Naive thymus-derived CD4-positive, alpha-beta T cell (primary cell): ENCODE measurements at regions of chr20 and their contacts with region 1.

Region 1: GRCh38 chr20:2742934-2743559 is 50.5 kb downstream of the EBF4 start:
- DNase-seq: peak; percentile 51 to 84 (median 73)
- ATAC-seq: peak; percentile 75
- H3K4me3 ChIP-seq: peak overlapping the region; percentile 29
- H3K4me3 Mint-ChIP-seq: peak overlapping the region; percentile 66 to 85 (median 76)
- H3K27ac ChIP-seq: peak overlapping the region; percentile 65
- H3K27ac Mint-ChIP-seq: peak overlapping the region; percentile 87 to 99 (median 94)
- H3K4me1 ChIP-seq: peaks cover 30 to 48% of the 10 kb centered on the region in 2 donors
- H3K4me1 Mint-ChIP-seq: peaks cover 34 to 54% (median 50%) of the 10 kb centered on the region in 7 donors
- H3K27me3 ChIP-seq: no peaks in the 10 kb centered on the region
- H3K27me3 Mint-ChIP-seq: peaks cover 0 to 21% (median 0%) of the 10 kb centered on the region in 5 donors

Region 2: DNA sequence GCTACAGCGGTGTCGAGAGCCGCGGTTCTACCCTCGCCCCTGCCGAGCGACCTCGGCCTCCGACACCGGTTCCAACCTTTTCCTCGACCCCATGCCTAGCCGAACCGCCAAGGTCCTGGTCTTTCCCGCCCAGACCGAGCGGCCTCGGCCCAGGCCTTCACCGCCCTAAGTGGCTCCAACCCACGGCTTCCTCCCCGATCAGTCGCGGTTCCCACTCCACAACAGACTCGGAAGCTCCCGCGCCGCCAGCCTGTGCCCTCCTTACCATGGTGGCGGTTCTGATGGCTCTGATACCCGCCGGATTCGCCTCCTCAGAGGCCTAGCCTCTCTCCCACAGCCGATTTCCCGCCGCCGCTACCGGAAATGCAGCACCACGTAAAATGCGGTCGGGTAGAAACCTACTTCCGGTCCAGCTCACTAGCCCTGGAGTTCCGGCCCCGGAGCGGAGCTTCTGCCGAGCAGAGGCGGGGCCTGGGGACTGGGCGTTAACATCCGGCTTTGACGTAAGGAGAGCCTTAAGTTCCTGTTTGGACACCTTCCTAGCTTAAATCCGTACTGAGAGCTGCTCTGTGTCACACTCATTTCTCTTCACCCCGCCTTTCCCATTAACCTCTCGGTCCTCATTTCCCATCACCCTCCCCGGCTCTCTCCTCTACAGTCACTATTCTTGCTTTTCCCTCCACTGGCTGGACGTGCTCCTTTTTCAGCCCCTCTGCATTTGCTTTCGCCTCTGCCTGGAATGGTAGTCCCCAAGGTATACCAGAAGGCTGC is 272.4 kb before region 1 on chr20 and contains the start of gene SNRPB:
- CTCF ChIA-PET with region 1: no interaction called
- POLR2A ChIA-PET with region 1: no interaction called
- intact Hi-C with region 1: loop called in 1 of 2 experiments (anchors 2 kb)
- DNase-seq: peak; percentile 87 to 97 (median 96)
- ATAC-seq: peak; percentile 97
- H3K4me3 ChIP-seq: peak within 1 kb of the TSS; percentile 70
- H3K4me3 Mint-ChIP-seq: peak within 1 kb of the TSS; percentile 88 to 99 (median 98)
- H3K27ac ChIP-seq: peak within 1 kb of the TSS; percentile 93
- H3K27ac Mint-ChIP-seq: peak within 1 kb of the TSS; percentile 91 to 100 (median 98)
- H3K4me1 ChIP-seq: peaks cover 17 to 18% of the 10 kb centered on the region in 2 donors
- H3K4me1 Mint-ChIP-seq: peaks cover 27 to 45% (median 39%) of the 10 kb centered on the region in 7 donors
- H3K27me3 ChIP-seq: no peaks in the 10 kb centered on the region
- H3K27me3 Mint-ChIP-seq: peaks cover 0 to 2% (median 0%) of the 10 kb centered on the region in 5 donors
- total RNA-seq, gene SNRPB: 83.5 to 323 (median 118) TPM

Region 3: GRCh38 chr20:2663887-2664719 is 78.9 kb before region 1 on chr20 and contains the start of gene IDH3B:
- CTCF ChIA-PET with region 1: no interaction called
- POLR2A ChIA-PET with region 1: interaction called, 10 read pairs
- intact Hi-C with region 1: no loop called
- DNase-seq: peak; percentile 76 to 94 (median 90)
- ATAC-seq: peak; percentile 99
- H3K4me3 ChIP-seq: peak within 1 kb of the TSS; percentile 89
- H3K4me3 Mint-ChIP-seq: peak within 1 kb of the TSS; percentile 87 to 97 (median 94)
- H3K27ac ChIP-seq: peak within 1 kb of the TSS; percentile 87
- H3K27ac Mint-ChIP-seq: peak within 1 kb of the TSS; percentile 94 to 99 (median 97)
- H3K4me1 ChIP-seq: peaks cover 10 to 15% of the 10 kb centered on the region in 2 donors
- H3K4me1 Mint-ChIP-seq: peaks cover 4 to 34% (median 29%) of the 10 kb centered on the region in 7 donors
- H3K27me3 ChIP-seq: no peaks in the 10 kb centered on the region
- H3K27me3 Mint-ChIP-seq: peaks cover 0 to 10% (median 0%) of the 10 kb centered on the region in 5 donors
- total RNA-seq, gene IDH3B: 105 to 161 (median 107) TPM

Region 4: GRCh38 chr20:2713285-2713684 is 29.8 kb before region 1 on chr20:
- CTCF ChIA-PET with region 1: interaction called, 262 read pairs
- POLR2A ChIA-PET with region 1: interaction called, 35 read pairs
- intact Hi-C with region 1: loop called (anchors 1 kb)
- DNase-seq: peak in 7 of 9 donors; percentile 30 to 64 (median 51)
- ATAC-seq: peak; percentile 73
- H3K4me3 ChIP-seq: no peak overlapping the region
- H3K4me3 Mint-ChIP-seq: no peak overlapping the region
- H3K27ac ChIP-seq: no peak overlapping the region
- H3K27ac Mint-ChIP-seq: no peak overlapping the region
- H3K4me1 ChIP-seq: peaks cover 0 to 3% of the 10 kb centered on the region in 2 donors
- H3K4me1 Mint-ChIP-seq: peaks cover 0 to 4% (median 0%) of the 10 kb centered on the region in 7 donors
- H3K27me3 ChIP-seq: no peaks in the 10 kb centered on the region
- H3K27me3 Mint-ChIP-seq: peaks cover 0 to 4% (median 0%) of the 10 kb centered on the region in 5 donors

Region 5: DNA sequence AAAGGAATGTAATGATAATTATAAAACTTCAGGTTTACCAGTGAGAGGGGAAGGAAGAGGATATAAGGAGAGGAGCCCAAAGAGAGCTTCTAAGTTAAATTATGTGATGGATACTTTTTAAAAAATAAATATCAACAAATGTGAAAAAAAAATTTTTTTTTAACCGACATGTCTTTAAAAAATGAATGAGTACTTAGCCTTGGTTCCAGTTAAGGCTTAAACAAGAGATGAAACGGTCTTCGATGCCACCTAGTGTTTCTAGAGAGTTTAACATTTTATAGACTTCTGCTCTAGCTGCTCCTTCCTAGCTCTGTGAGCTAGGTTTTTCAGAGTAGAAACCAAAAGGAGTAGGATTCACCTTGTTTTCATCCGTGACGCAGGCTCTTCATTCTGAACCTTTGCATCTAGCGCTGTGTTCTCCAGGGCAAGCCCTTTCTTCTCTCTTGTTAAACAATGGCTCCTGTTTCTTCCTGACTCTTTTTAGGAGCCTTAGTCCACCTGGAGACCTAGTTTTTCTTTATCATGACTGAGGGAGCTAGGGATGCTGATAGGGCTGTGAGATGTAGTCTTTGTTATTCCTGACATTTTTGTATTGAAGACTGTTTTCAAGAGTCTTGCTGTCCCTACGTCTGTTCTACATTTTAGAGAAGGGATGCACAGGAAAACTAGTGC is 257.9 kb after region 1 on chr20:
- CTCF ChIA-PET with region 1: no interaction called
- POLR2A ChIA-PET with region 1: no interaction called
- intact Hi-C with region 1: loop called in 1 of 2 experiments (anchors 1 kb)
- DNase-seq: peak in 7 of 9 donors; percentile 11 to 66 (median 49)
- ATAC-seq: peak; percentile 88
- H3K4me3 ChIP-seq: no peak overlapping the region
- H3K4me3 Mint-ChIP-seq: no peak overlapping the region
- H3K27ac ChIP-seq: no peak overlapping the region
- H3K27ac Mint-ChIP-seq: peak overlapping the region in 1 of 9 donors; percentile 18
- H3K4me1 ChIP-seq: no peaks in the 10 kb centered on the region
- H3K4me1 Mint-ChIP-seq: peaks cover 0 to 2% (median 0%) of the 10 kb centered on the region in 7 donors
- H3K27me3 ChIP-seq: no peaks in the 10 kb centered on the region
- H3K27me3 Mint-ChIP-seq: no peaks in the 10 kb centered on the region